CD8-positive, alpha-beta T cell (primary cell): ENCODE measurements at regions of chr11 and their contacts with region 1.

Region 1: GRCh38 chr11:112113539-112114457 is 27.1 kb downstream of the SDHD start:
- DNase-seq: peak in 2 of 9 experiments; percentile 51 to 69
- ATAC-seq: peak; percentile 54
- H3K4me3 ChIP-seq: no peak overlapping the region
- H3K4me3 Mint-ChIP-seq: no peak overlapping the region
- H3K27ac ChIP-seq: no peak overlapping the region
- H3K27ac Mint-ChIP-seq: no peak overlapping the region
- H3K4me1 ChIP-seq: peaks cover 4% of the 10 kb centered on the region
- H3K4me1 Mint-ChIP-seq: peaks cover 10% of the 10 kb centered on the region
- H3K27me3 ChIP-seq: no peaks in the 10 kb centered on the region
- H3K27me3 Mint-ChIP-seq: no peaks in the 10 kb centered on the region
- CTCF ChIP-seq: peak; percentile 89

Region 2: DNA sequence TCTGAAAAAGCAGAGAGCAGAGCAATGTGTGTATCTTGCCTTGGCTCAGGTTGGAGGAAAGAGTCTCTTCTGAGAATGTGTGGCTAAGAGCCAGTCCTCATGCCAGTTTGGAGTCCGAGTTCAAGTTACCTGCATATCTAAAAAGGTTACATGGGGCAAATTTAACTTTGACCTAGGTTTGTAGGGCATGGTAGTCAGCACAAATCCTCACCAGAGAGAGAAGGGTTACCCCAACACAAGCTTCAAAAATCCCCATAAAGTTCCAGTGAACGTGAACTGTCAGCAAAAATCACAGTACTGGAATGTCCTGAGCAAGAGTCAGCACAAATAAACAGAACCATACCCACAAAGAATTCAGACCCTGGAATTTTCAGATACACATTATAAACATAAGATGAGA is 13.3 kb before region 1 on chr11:
- CTCF ChIA-PET with region 1: interaction called, 13 read pairs
- POLR2A ChIA-PET with region 1: no interaction called
- intact Hi-C with region 1: no loop called
- DNase-seq: no peak
- ATAC-seq: no peak
- H3K4me3 ChIP-seq: no peak overlapping the region
- H3K4me3 Mint-ChIP-seq: no peak overlapping the region
- H3K27ac ChIP-seq: no peak overlapping the region
- H3K27ac Mint-ChIP-seq: no peak overlapping the region
- H3K4me1 ChIP-seq: no peaks in the 10 kb centered on the region
- H3K4me1 Mint-ChIP-seq: no peaks in the 10 kb centered on the region
- H3K27me3 ChIP-seq: no peaks in the 10 kb centered on the region
- H3K27me3 Mint-ChIP-seq: no peaks in the 10 kb centered on the region
- CTCF ChIP-seq: no peak

Region 3: GRCh38 chr11:112128483-112129121 is 14.8 kb after region 1 on chr11:
- CTCF ChIA-PET with region 1: interaction called, 11 read pairs
- POLR2A ChIA-PET with region 1: no interaction called
- intact Hi-C with region 1: no loop called
- DNase-seq: no peak
- ATAC-seq: no peak
- H3K4me3 ChIP-seq: no peak overlapping the region
- H3K4me3 Mint-ChIP-seq: no peak overlapping the region
- H3K27ac ChIP-seq: no peak overlapping the region
- H3K27ac Mint-ChIP-seq: no peak overlapping the region
- H3K4me1 ChIP-seq: no peaks in the 10 kb centered on the region
- H3K4me1 Mint-ChIP-seq: no peaks in the 10 kb centered on the region
- H3K27me3 ChIP-seq: no peaks in the 10 kb centered on the region
- H3K27me3 Mint-ChIP-seq: no peaks in the 10 kb centered on the region
- CTCF ChIP-seq: no peak

Region 4: DNA sequence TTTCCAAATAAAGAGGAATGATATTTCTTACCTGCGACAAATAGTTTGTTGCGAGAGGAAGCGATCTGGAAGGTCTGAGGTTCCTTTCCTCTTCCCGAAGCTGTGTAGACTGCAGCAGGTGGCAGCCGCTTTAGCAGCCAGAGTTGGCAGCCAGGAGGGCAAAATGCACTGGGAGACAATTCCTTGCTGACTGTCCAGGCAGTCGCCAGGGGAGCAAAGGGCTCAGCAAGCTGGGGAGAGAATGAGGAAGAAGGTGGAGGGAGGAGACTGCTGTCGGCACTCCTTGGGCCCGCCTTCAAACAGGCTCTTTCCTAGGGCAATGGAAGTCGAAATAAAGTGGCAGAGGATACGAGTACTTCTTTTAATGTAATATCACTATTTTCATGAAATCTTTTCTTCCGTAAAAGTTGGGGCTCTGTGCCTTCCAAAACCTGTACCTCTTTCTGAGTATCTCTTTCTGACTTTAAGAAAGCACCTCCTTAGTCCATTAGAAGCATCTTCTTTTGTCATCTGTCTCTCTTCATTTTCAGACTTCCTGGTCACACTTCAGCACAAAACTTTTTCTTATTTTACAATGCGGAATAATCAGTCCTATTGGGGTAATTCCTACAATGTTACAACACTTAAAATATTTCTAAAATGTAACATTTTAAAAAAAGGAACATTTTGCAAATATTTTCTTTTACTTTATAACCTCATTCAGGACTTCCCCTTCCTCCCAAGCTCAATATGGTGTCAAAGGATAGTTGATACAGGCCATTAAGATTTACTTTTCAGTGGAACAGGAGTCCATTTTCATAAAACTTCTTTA is 50.3 kb after region 1 on chr11 and contains the start of gene IL18:
- CTCF ChIA-PET with region 1: no interaction called
- POLR2A ChIA-PET with region 1: no interaction called
- intact Hi-C with region 1: no loop called
- DNase-seq: peak in 1 of 9 experiments; percentile 7
- ATAC-seq: no peak
- H3K4me3 ChIP-seq: no peak within 1 kb of the TSS
- H3K4me3 Mint-ChIP-seq: no peak within 1 kb of the TSS
- H3K27ac ChIP-seq: no peak within 1 kb of the TSS
- H3K27ac Mint-ChIP-seq: no peak within 1 kb of the TSS
- H3K4me1 ChIP-seq: no peaks in the 10 kb centered on the region
- H3K4me1 Mint-ChIP-seq: peaks cover 6% of the 10 kb centered on the region
- H3K27me3 ChIP-seq: no peaks in the 10 kb centered on the region
- H3K27me3 Mint-ChIP-seq: peaks cover 18% of the 10 kb centered on the region
- CTCF ChIP-seq: no peak
- total RNA-seq, gene IL18: not detected